ENCODE measurements at regions of chr1 and their contacts with region 1.

Region 1: DNA sequence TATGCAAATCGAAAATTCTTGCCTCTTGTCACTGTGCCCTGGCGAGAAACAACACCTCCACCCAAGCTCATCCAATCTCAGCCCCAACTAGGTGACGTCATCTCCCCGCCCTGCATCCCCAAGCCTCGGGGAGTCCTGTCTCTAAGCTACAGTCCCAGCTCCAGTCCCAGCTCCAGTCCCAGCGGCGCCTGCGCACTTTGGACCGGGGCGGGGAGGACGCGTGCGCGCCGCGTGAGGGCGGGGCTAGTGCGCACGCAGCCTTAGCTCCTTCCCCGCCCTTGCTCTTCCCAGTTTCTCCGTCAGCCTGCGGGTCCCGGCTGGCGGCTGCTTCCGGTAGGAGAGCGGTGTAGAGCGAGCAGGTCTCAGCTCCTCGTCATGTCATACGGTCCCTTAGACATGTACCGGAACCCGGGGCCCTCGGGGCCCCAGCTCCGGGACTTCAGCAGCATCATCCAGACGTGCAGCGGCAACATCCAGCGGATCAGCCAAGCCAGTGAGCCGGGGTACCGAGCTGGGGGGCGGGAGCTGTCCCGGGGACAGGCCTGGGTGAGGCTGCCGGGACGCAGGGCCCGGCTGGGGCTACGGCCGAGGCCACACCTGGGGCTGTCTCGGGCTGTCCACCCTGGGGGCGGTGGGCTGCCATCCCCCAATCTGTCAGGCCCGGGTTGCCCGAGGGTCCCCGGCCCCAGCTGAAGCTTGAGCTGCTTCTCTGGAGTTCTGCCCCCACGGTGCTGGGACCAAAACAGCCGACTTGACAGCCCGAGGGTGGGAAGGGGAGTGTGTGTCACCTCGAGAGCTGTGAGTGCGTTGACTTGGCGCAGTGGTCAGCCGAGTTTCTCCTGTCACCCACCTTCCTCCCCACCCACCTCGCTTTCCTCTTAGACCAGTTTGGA is at the start of gene STX12:
- DNase-seq: peak; percentile 100
- ATAC-seq: peak; percentile 93
- H3K4me3 ChIP-seq: peak within 1 kb of the TSS; percentile 81
- H3K27ac ChIP-seq: peak within 1 kb of the TSS; percentile 89
- H3K4me1 ChIP-seq: peaks cover 6% of the 10 kb centered on the region
- H3K27me3 ChIP-seq: no peaks in the 10 kb centered on the region
- CTCF ChIP-seq: no peak
- EP300 ChIP-seq: no peak
- POLR2A ChIP-seq: peak; percentile 87
- RAD21 ChIP-seq: no peak
- polyA plus RNA-seq, gene STX12: 23.5 to 26.9 TPM

Region 2: GRCh38 chr1:27725374-27726173 is 47.6 kb before region 1 on chr1 and contains the start of gene FAM76A:
- CTCF ChIA-PET with region 1: interaction called, 15 read pairs
- POLR2A ChIA-PET with region 1: interaction called, 26 read pairs
- RAD21 ChIA-PET with region 1: interaction called, 39 read pairs
- SMC1A ChIA-PET with region 1: interaction called, 9 read pairs
- in situ Hi-C with region 1: no loop called
- intact Hi-C with region 1: loop called (anchors 2 kb)
- DNase-seq: peak; percentile 97
- ATAC-seq: peak; percentile 98
- H3K4me3 ChIP-seq: peak within 1 kb of the TSS; percentile 77
- H3K27ac ChIP-seq: peak within 1 kb of the TSS; percentile 73
- H3K4me1 ChIP-seq: peaks cover 11% of the 10 kb centered on the region
- H3K27me3 ChIP-seq: no peaks in the 10 kb centered on the region
- CTCF ChIP-seq: peak; percentile 37 to 75 (median 39); a peak in 4 of 6 replicates
- EP300 ChIP-seq: no peak
- POLR2A ChIP-seq: peak; percentile 82
- RAD21 ChIP-seq: no peak; the same call in 1 of the 2 replicates
- polyA plus RNA-seq, gene FAM76A: 7.6 to 13.4 TPM

Region 3: GRCh38 chr1:27785781-27786455 is 12.7 kb after region 1 on chr1:
- CTCF ChIA-PET with region 1: interaction called, 6 read pairs
- POLR2A ChIA-PET with region 1: interaction called, 7 read pairs
- RAD21 ChIA-PET with region 1: no interaction called
- SMC1A ChIA-PET with region 1: interaction called, 21 read pairs
- in situ Hi-C with region 1: no loop called
- intact Hi-C with region 1: no loop called
- DNase-seq: no peak
- ATAC-seq: peak; percentile 23; the same call in 2 of the 3 replicates
- H3K4me3 ChIP-seq: no peak overlapping the region
- H3K27ac ChIP-seq: no peak overlapping the region
- H3K4me1 ChIP-seq: no peaks in the 10 kb centered on the region
- H3K27me3 ChIP-seq: no peaks in the 10 kb centered on the region
- CTCF ChIP-seq: no peak
- EP300 ChIP-seq: no peak
- POLR2A ChIP-seq: no peak
- RAD21 ChIP-seq: no peak

Region 4: GRCh38 chr1:27830621-27831424 is 57.6 kb after region 1 on chr1 and contains the start of gene PPP1R8:
- CTCF ChIA-PET with region 1: no interaction called
- POLR2A ChIA-PET with region 1: interaction called, 4 read pairs
- RAD21 ChIA-PET with region 1: interaction called, 8 read pairs
- SMC1A ChIA-PET with region 1: interaction called, 35 read pairs
- in situ Hi-C with region 1: no loop called
- intact Hi-C with region 1: no loop called
- DNase-seq: peak; percentile 72
- ATAC-seq: peak; percentile 99
- H3K4me3 ChIP-seq: peak within 1 kb of the TSS; percentile 90
- H3K27ac ChIP-seq: peak within 1 kb of the TSS; percentile 87
- H3K4me1 ChIP-seq: no peaks in the 10 kb centered on the region
- H3K27me3 ChIP-seq: no peaks in the 10 kb centered on the region
- CTCF ChIP-seq: no peak
- EP300 ChIP-seq: 0 out of 4 replicates have a peak, but pooled peaks of 1 of the 2 experiments have one; percentile 8
- POLR2A ChIP-seq: peak; percentile 97
- RAD21 ChIP-seq: no peak
- polyA plus RNA-seq, gene PPP1R8: 14.5 to 15.3 TPM